ENCODE measurements at regions of chr6 and their contacts with region 1.

Region 1: GRCh38 chr6:137313928-137314855 is 95.0 kb upstream of the IFNGR1 start:
- DNase-seq: peak; percentile 23
- H3K4me3 Mint-ChIP-seq: no peak overlapping the region
- H3K27ac Mint-ChIP-seq: no peak overlapping the region
- H3K4me1 Mint-ChIP-seq: peaks cover 3% of the 10 kb centered on the region
- H3K27me3 Mint-ChIP-seq: peaks cover 18% of the 10 kb centered on the region

Region 2: GRCh38 chr6:136967876-136968752 is 346.1 kb before region 1 on chr6:
- intact Hi-C with region 1: loop called (anchors 2 kb)
- DNase-seq: peak; percentile 50
- H3K4me3 Mint-ChIP-seq: no peak overlapping the region
- H3K27ac Mint-ChIP-seq: no peak overlapping the region
- H3K4me1 Mint-ChIP-seq: peaks cover 6% of the 10 kb centered on the region
- H3K27me3 Mint-ChIP-seq: peaks cover 45% of the 10 kb centered on the region

Region 3: DNA sequence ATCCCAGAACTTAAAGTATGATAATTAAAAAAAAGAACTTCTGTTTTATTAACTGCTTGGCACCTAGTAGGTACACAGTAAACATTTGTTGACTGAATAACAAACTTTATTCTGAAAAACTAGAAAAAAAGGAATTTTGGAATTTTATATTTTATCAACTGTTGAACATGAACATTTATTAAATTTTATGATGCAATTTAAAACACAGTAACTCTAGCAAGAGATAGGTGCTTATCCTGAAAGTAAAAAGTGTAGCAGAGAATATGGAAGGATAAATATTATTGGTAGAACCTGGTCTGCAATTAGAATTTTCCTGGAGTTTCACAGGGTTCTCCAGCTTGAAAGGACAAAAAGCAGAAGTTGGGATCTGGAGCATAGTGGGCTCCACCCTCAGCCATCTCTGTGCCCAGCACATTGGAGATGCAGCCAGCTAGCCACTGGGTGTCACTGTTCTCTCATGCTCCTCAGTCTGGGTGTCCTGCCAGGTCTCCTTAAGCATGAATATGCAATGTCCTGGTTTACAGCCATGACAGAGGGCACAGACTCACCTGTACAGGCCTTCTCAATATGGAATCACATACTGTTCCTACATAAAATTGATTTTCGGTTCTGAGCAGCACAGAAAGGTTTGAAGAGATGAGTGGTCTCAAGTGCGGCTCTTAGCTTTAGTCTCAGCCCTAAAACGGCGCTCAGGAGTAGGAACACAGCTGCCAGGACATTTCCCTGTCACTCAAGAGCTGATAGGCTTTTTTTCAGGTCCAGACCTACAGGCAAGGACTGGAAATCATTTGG is 237.7 kb before region 1 on chr6:
- intact Hi-C with region 1: loop called (anchors 1 kb)
- DNase-seq: peak; percentile 36
- H3K4me3 Mint-ChIP-seq: no peak overlapping the region
- H3K27ac Mint-ChIP-seq: no peak overlapping the region
- H3K4me1 Mint-ChIP-seq: no peaks in the 10 kb centered on the region
- H3K27me3 Mint-ChIP-seq: peaks cover 52% of the 10 kb centered on the region

Region 4: GRCh38 chr6:137087902-137088301 is 226.3 kb before region 1 on chr6:
- intact Hi-C with region 1: no loop called
- DNase-seq: no peak
- H3K4me3 Mint-ChIP-seq: no peak overlapping the region
- H3K27ac Mint-ChIP-seq: no peak overlapping the region
- H3K4me1 Mint-ChIP-seq: peaks cover 9% of the 10 kb centered on the region
- H3K27me3 Mint-ChIP-seq: peaks cover 12% of the 10 kb centered on the region

Region 5: DNA sequence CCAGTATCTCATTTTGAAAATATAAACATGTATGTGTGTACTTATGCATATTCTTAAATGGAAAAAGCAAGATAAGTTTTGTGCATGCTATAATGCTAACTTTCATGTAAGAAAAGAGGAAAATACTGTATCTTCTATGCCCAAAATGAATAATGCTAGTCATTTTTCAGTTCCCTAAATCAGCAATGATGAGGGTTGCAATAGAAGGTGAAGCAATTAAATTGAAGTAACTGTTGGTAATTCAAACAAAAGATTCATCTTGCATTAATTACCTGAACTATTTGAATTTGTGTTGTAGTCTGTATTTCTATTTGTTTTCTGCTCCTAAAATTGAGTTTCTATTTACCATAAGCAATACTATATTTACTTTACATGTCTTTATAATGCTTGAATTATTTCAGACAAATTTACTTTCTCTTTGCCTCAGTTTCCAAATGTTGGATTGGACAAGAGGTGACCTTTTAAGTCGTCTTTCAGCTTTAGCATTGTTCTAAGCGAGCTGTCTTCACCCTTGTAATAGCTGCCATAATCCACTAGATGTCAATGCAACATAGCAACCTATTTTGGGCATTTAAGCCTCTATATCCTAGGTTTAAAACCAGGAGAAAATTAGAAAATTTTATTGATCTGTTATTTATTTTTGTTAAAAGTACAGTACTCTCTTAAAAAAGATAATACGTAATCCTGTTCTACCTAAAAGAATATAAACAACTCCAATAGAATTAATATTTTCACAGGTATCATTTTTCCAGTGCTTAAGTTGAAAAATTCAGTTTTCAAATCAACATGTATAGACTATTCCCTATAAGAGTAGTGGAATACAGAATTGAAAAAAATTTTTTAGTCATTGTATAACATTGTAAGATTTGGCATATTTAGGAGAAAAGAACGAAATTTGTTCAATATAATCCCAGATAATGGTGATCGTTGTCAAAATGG is 42.7 kb before region 1 on chr6:
- intact Hi-C with region 1: loop called (anchors 1 kb)
- DNase-seq: no peak
- H3K4me3 Mint-ChIP-seq: no peak overlapping the region
- H3K27ac Mint-ChIP-seq: no peak overlapping the region
- H3K4me1 Mint-ChIP-seq: peaks cover 6% of the 10 kb centered on the region
- H3K27me3 Mint-ChIP-seq: peaks cover 33% of the 10 kb centered on the region